ENCODE measurements at regions of chr10 and their contacts with region 1.

Region 1: GRCh38 chr10:63157845-63158624 is 24.9 kb downstream of the NRBF2 start:
- DNase-seq: peak; percentile 39
- H3K4me3 ChIP-seq: no peak overlapping the region
- H3K27ac ChIP-seq: no peak overlapping the region
- H3K4me1 ChIP-seq: peaks cover 5% of the 10 kb centered on the region
- H3K27me3 ChIP-seq: no peaks in the 10 kb centered on the region
- CTCF ChIP-seq: peak; percentile 79

Region 2: DNA sequence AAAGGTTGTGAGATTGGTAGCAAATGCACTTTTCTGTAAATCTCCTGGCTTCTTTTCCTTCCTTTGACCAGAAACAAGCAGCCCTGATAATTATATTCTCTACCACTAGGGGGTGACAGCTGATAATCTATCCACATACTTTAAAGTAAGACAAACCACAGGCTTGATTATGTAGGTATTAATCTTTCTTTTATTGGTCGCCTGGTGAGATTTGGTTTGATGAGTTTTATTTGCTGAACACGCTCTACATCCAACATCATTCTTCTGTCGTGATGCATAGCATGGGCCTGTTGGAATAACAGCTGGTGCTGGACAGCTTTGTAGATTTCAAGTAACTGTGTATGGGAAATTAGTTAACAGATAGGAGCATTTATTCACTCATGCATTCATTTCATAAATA is 720.3 kb before region 1 on chr10:
- intact Hi-C with region 1: loop called (anchors 5 kb)
- DNase-seq: peak; percentile 31
- H3K4me3 ChIP-seq: no peak overlapping the region
- H3K27ac ChIP-seq: no peak overlapping the region
- H3K4me1 ChIP-seq: no peaks in the 10 kb centered on the region
- H3K27me3 ChIP-seq: no peaks in the 10 kb centered on the region
- CTCF ChIP-seq: peak; percentile 71

Region 3: DNA sequence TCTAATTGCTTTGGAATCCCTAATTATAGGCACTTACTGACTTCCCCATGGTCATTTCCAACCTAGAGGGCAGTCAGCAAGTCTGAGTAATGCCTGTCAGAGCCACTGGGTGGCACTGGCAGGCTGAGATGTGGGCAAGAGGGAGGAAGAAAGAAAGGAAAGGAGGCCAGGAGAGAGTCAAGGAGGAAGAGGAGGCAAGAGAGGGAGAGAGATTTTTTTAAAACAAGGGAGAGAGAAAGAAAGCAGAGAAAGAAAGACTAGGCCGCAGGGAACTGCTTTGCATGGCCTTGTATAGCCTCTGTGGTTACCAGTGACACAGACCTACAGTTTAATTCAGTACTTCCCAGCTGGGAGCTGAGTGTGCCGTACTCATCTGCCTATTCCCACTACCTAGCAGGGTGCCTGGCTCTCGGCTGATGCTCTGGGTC is 563.9 kb before region 1 on chr10:
- intact Hi-C with region 1: loop called (anchors 5 kb)
- DNase-seq: peak; percentile 63
- H3K4me3 ChIP-seq: no peak overlapping the region
- H3K27ac ChIP-seq: no peak overlapping the region
- H3K4me1 ChIP-seq: no peaks in the 10 kb centered on the region
- H3K27me3 ChIP-seq: no peaks in the 10 kb centered on the region
- CTCF ChIP-seq: peak; percentile 87

Region 4: GRCh38 chr10:63657761-63658160 is 499.7 kb after region 1 on chr10:
- intact Hi-C with region 1: no loop called
- DNase-seq: no peak
- H3K4me3 ChIP-seq: no peak overlapping the region
- H3K27ac ChIP-seq: no peak overlapping the region
- H3K4me1 ChIP-seq: no peaks in the 10 kb centered on the region
- H3K27me3 ChIP-seq: no peaks in the 10 kb centered on the region
- CTCF ChIP-seq: no peak